ENCODE measurements at regions of chr16 and their contacts with region 1.

Region 1: DNA sequence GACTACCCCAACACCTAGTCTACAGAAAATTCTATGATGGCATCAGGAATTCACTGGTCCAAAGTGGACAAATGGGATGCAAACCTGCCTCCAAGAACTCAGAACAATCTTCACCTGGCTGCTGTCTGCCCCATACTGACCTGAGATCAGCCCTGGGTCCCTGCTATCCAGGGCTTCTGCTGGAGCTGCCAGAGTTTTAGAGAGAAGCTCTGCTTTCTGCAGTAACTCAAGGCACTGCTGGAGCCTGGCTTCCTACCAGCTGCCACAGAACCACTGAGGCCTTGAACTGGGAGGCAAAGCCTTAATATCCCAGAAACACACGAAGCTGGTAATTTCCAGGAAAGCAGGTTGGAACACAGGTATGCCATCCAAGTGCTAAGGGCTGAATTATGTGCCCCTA is 7.5 kb downstream of the TMEM170A start:
- DNase-seq: no peak
- ATAC-seq: no peak
- H3K4me3 Mint-ChIP-seq: no peak overlapping the region
- H3K27ac Mint-ChIP-seq: no peak overlapping the region
- H3K4me1 Mint-ChIP-seq: peaks cover 35% of the 10 kb centered on the region
- H3K27me3 Mint-ChIP-seq: no peaks in the 10 kb centered on the region

Region 2: GRCh38 chr16:74813109-74813641 is 643.8 kb before region 1 on chr16:
- CTCF ChIA-PET with region 1: no interaction called
- POLR2A ChIA-PET with region 1: no interaction called
- intact Hi-C with region 1: no loop called
- DNase-seq: peak; percentile 89
- ATAC-seq: peak; percentile 100
- H3K4me3 Mint-ChIP-seq: no peak overlapping the region
- H3K27ac Mint-ChIP-seq: no peak overlapping the region
- H3K4me1 Mint-ChIP-seq: no peaks in the 10 kb centered on the region
- H3K27me3 Mint-ChIP-seq: no peaks in the 10 kb centered on the region

Region 3: DNA sequence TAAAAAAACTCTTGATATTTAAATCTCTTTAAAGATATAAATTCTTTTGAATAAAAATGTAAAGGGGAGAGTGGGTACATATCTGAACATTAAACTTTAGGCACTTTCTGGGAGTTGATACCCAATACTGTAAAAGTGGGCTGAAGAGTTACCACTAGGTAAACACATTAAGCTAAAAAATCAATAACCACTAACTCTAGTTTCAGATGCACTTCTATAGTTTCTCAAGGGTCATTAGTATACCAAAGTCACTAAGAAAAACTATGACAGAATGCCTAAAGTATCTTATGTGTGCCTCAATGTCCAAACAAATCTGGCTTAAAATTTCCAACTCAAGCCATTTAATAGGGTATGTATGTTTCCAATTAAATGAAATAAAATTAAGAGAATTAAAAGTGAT is 10.6 kb before region 1 on chr16:
- CTCF ChIA-PET with region 1: interaction called, 10 read pairs
- POLR2A ChIA-PET with region 1: no interaction called
- intact Hi-C with region 1: no loop called
- DNase-seq: no peak
- ATAC-seq: no peak
- H3K4me3 Mint-ChIP-seq: no peak overlapping the region
- H3K27ac Mint-ChIP-seq: no peak overlapping the region
- H3K4me1 Mint-ChIP-seq: no peaks in the 10 kb centered on the region
- H3K27me3 Mint-ChIP-seq: no peaks in the 10 kb centered on the region

Measured in activated CD4-positive, alpha-beta T cell treated with anti-CD3 and anti-CD28 coated beads for 36 hours (primary cell).